ENCODE measurements at regions of chr5 and their contacts with region 1.

Region 1: DNA sequence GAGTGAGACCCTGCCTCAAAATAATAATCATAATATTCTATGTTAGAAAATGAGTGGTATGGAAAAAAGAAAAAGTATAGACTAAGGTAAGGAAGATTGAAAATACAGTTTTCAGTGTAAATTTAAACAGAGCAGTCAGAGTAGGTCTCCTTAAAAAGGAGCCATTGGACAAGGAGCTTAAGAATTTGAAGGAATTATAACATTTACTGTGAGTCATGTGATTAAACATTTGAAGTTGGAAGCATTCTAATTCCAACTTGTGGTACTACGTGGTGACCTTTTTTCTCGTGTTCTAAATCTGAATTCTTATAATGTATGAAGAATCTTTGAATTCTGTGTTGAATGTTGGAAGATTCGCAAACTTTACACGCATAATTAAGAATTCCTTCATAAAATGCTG is 39.3 kb upstream of the TMEM171 start:
- DNase-seq: no peak

Region 2: DNA sequence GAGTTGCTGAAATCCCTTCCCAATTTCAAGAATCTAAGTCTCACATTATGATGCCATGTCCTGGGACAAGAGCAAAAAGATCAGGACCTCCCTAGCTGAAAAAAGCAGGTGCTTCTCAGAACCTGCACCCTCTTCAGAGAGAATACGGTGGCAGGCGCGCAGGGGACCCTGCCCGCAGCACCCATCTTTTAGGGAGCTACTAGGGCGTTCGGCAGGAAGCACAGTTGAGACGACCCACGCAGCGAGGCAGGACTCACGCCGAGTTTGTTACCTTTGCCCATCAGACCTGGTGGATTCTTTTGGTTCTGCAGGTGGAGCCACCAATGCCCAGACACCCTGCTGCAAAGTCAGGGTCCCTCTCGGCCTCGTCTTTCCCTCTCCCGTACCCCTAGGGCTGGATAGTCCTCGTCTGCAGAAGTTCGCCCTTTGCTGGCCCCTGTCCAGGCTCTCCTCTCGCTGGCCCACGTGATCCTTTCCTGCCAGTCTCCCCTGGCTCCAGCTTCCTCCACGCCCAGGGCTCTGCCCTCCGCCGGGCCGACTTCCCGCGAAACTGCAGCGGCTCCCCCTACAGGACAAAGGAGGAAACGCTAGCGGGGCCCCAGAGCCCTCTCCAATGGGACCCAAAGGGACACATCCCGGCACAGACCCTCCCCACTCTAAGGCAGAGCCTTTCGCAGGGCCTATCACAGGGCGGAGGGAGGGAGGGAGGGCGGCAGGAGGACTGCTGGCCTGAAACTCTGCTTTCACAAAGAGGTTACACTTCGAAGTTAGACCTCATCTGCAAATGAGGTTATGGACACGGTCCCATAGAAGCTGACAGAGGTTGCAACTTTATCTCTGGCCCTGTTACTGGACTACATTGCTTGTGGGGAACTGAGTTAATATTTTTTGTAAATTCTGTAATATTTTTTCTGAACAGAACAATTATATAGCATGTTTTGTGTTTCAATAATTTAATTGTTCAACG is 120.7 kb after region 1 on chr5:
- intact Hi-C with region 1: loop called (anchors 5 kb)
- DNase-seq: peak; percentile 85

Region 3: GRCh38 chr5:73534971-73535370 is 453.9 kb after region 1 on chr5:
- intact Hi-C with region 1: loop called (anchors 5 kb)
- DNase-seq: no peak